ENCODE measurements at regions of chr15 and their contacts with region 1.

Region 1: DNA sequence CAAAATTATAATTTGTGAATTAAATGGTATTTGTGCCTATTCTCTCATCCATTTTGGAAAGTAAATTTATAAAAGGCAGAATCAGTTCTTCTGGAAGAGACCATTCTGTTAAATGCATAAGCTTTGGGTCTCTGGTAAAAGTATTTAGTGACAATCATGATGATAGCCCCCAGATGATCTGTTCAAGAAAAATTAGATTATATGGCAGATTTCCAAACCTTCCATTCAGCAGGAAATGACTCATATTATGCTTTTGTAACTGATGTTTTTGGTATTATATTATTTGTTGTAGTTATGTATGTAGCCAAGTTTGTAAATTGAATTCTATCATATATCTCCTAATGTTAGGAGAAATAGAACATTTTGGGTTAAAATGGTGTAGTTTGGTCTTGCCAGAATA is 340.8 kb upstream of the DPH6 start:
- DNase-seq: peak; percentile 63
- H3K4me3 ChIP-seq: no peak overlapping the region
- H3K27ac ChIP-seq: no peak overlapping the region
- H3K4me1 ChIP-seq: peaks cover 3% of the 10 kb centered on the region
- H3K27me3 ChIP-seq: no peaks in the 10 kb centered on the region
- CTCF ChIP-seq: no peak
- POLR2A ChIP-seq: no peak

Region 2: GRCh38 chr15:35181538-35181937 is 705.2 kb before region 1 on chr15:
- CTCF ChIA-PET with region 1: no interaction called
- POLR2A ChIA-PET with region 1: no interaction called
- dilution Hi-C with region 1: no loop called
- intact Hi-C with region 1: loop called (anchors 10 kb)
- DNase-seq: peak; percentile 50
- H3K4me3 ChIP-seq: no peak overlapping the region
- H3K27ac ChIP-seq: no peak overlapping the region
- H3K4me1 ChIP-seq: peaks cover 3% of the 10 kb centered on the region
- H3K27me3 ChIP-seq: no peaks in the 10 kb centered on the region
- CTCF ChIP-seq: no peak
- POLR2A ChIP-seq: no peak

Region 3: GRCh38 chr15:35393403-35393802 is 493.4 kb before region 1 on chr15:
- CTCF ChIA-PET with region 1: no interaction called
- POLR2A ChIA-PET with region 1: no interaction called
- dilution Hi-C with region 1: no loop called
- intact Hi-C with region 1: no loop called
- DNase-seq: no peak
- H3K4me3 ChIP-seq: no peak overlapping the region
- H3K27ac ChIP-seq: no peak overlapping the region
- H3K4me1 ChIP-seq: peaks cover 7% of the 10 kb centered on the region
- H3K27me3 ChIP-seq: no peaks in the 10 kb centered on the region
- CTCF ChIP-seq: no peak
- POLR2A ChIP-seq: no peak

Region 4: GRCh38 chr15:35713733-35714132 is 173.0 kb before region 1 on chr15:
- CTCF ChIA-PET with region 1: no interaction called
- POLR2A ChIA-PET with region 1: no interaction called
- dilution Hi-C with region 1: no loop called
- intact Hi-C with region 1: no loop called
- DNase-seq: peak; percentile 22
- H3K4me3 ChIP-seq: no peak overlapping the region
- H3K27ac ChIP-seq: no peak overlapping the region
- H3K4me1 ChIP-seq: no peaks in the 10 kb centered on the region
- H3K27me3 ChIP-seq: no peaks in the 10 kb centered on the region
- CTCF ChIP-seq: no peak
- POLR2A ChIP-seq: no peak

Region 5: DNA sequence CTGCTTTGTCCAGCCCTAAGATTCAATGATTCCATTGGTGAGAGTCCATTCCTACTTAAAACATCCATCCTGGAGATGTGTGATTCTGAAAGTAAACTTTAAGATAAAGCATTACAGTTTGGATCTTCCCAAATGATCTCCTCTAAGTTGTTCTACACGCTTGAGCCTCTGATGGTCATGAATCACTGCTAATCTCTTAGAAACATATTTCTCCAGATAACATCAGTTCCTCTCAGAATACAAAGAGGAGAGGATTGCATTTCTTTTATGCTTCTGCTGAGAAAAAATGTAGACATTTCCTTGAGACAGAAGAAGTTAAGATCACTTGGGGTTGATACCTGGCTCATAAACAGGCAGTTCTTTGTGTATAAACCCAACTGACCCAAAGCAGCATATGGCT is 59.6 kb before region 1 on chr15:
- CTCF ChIA-PET with region 1: no interaction called
- POLR2A ChIA-PET with region 1: no interaction called
- dilution Hi-C with region 1: no loop called
- intact Hi-C with region 1: loop called (anchors 10 kb)
- DNase-seq: peak; percentile 77
- H3K4me3 ChIP-seq: no peak overlapping the region
- H3K27ac ChIP-seq: peak overlapping the region; percentile 16
- H3K4me1 ChIP-seq: peaks cover 22% of the 10 kb centered on the region
- H3K27me3 ChIP-seq: no peaks in the 10 kb centered on the region
- CTCF ChIP-seq: no peak
- POLR2A ChIP-seq: no peak

Region 6: DNA sequence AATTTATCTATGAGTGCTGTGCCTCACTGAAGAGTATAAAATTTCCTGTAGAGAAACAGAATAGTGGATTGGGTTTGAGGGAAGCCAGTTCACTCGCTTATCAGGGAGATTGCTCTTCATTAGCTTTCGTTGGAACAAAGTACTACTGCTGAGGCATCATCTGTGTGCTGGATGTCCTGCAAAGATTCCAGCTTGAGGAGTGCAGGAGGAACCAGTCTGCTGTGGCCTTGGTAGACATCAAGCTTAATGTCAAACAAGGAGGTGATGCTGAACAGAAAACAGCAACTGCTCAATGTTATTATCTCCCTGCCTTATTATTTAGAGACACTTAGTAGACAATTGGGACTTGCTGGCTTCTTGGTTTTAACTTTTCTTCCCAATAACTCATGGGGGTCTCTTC is 43.3 kb before region 1 on chr15:
- CTCF ChIA-PET with region 1: no interaction called
- POLR2A ChIA-PET with region 1: no interaction called
- dilution Hi-C with region 1: no loop called
- intact Hi-C with region 1: no loop called
- DNase-seq: no peak
- H3K4me3 ChIP-seq: no peak overlapping the region
- H3K27ac ChIP-seq: no peak overlapping the region
- H3K4me1 ChIP-seq: no peaks in the 10 kb centered on the region
- H3K27me3 ChIP-seq: peaks cover 26% of the 10 kb centered on the region in 2 experiments
- CTCF ChIP-seq: no peak
- POLR2A ChIP-seq: no peak

Measured in endothelial cell of umbilical vein (primary cell).